ENCODE measurements at regions of chr1 and their contacts with region 1.

Region 1: DNA sequence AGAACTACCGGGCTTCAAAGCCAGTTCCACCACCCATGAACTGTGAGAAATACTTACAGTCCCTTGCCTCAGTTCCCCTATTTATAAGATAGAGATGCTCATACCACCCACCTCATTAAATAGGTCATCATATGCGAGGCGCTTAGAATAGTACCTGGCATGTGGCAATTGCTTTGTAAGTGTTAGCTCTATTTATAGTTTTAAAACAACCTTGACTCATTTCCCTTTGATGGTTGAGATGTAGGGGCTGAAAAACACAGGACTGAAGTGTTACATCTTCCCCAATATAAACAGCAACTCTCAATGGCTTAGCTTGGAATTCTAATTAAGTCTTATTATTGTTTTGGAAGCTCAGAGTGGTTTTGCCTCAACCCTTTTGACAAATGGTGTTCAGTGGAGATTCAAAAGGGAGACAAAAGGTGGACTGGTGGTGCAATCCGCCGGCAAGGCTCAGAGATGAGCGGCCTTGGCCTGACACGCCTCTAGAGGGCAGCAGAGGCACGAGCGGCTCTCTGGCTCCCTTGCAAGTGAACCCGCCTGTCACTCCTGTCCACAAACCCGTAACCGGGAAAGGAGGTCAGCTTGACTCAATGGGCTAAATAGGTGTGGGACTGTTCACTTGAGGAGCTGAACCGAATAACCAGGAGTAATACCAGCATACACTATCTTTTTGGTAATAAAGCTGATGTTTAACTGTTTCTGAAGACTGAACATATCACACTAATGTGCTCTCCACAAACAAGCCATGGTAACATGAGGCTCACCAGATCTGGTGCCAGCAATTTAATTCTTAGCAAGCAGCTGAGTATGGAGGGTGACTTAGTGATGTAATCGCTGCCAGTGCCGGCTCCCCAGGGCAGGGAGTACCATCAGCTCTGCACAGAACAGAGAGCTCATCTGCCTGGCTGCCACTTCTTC is 19.5 kb upstream of the SMYD2 start:
- H3K4me3 ChIP-seq: no peak overlapping the region
- H3K27ac ChIP-seq: no peak overlapping the region
- H3K4me1 ChIP-seq: no peaks in the 10 kb centered on the region
- CTCF ChIP-seq: peak; percentile 88

Region 2: DNA sequence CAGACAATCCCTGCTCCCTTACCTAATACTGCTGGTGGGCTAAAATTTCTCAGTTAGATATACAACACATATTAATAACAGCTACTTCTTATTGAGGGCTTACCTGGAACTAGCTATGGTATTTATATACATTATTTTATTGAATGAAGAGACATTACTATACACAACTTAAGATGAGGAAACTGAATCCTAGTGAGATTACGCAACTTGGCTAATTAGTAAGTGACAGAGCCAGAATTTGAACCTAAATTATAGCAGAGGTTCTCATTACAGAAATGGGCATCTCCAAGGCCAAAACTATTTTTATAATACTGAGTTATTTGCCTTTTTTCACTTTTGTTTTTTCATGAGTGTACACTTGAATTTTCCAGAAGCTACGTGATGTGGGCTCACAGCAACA is 25.0 kb before region 1 on chr1:
- CTCF ChIA-PET with region 1: interaction called, 17 read pairs
- POLR2A ChIA-PET with region 1: no interaction called
- H3K4me3 ChIP-seq: no peak overlapping the region
- H3K27ac ChIP-seq: no peak overlapping the region
- H3K4me1 ChIP-seq: no peaks in the 10 kb centered on the region
- CTCF ChIP-seq: no peak

Region 3: GRCh38 chr1:214303141-214303930 is 41.9 kb after region 1 on chr1:
- CTCF ChIA-PET with region 1: interaction called, 19 read pairs
- POLR2A ChIA-PET with region 1: no interaction called
- H3K4me3 ChIP-seq: no peak overlapping the region
- H3K27ac ChIP-seq: no peak overlapping the region
- H3K4me1 ChIP-seq: no peaks in the 10 kb centered on the region
- CTCF ChIP-seq: no peak

Region 4: DNA sequence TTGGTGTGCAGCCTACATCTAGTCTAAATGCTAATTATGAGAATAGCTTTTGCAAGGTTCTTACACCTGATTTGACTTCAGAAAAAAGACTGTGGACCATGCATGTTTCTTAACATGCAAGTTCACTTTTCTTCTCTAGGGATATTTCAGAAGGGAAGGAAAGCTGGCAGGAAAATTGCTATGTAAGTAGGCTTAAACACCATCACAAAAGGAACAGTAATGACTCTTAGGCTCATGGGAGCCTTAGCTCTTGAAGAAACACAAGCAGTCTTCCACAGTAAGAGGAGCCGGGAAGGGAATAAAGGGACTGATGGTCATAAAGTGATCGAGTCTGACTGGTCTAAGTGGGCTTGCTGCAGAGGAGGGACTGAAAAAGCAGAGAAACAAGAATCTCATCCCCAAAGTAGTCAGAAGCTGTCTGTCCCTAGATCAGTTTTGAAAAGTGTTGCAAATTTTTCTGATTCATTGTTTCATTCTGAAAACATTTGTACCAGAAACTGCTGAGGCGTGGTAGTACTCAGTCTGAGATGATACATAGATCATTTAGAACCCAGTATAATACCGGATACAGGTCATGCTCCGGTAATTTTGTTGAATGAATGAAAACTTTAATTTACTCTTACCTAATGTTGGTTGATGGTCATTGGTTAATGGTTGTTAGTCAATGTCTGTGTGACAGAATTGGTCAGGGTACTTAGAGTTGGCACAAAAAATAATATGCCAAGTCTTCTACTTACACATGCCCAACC is 60.4 kb after region 1 on chr1:
- CTCF ChIA-PET with region 1: interaction called, 428 read pairs
- POLR2A ChIA-PET with region 1: interaction called, 3 read pairs
- H3K4me3 ChIP-seq: no peak overlapping the region
- H3K27ac ChIP-seq: no peak overlapping the region
- H3K4me1 ChIP-seq: no peaks in the 10 kb centered on the region
- CTCF ChIP-seq: no peak

Region 5: DNA sequence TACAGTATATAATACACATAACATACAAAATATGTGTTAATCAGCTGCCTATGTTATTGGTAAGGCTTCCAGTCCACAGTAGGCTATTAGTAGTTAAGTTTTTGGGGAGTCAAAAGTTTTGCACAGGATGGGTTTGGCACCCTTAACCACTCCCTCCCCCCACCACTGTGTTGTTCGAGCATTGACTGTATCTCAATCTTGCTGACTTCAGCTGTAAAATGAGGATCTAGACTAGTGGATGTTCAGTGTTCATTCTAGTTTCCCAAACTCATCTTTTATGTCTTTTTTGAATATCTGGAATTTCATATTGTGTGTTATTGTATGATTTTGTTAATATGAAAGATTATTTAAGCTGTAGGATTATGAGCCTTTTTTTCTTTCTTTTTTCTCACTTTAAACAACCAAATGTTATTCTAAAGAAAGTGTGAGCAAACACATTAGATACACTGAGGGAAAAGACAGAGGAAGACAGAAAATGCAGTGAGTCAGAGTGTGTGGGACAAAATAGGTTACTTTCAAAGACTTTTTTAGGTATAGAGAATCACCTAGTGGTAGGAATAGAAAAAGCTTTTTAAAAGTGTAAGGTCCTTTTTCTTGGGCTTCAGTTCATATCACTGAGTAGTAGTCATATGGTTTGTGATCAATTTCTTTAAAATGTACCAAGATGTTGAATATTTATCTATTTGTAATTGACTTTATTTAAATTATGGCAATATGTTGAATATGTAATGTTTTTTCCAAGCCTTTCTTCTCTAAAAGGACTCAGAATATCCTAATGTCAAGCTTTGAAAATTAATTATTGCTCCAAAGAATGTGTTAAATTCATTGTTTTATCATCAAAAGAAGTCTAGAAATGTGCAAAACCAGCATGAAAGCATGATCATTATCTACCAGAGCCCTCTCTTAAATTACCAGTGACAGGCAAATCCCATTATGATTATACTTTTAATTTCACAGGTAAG is 323.6 kb after region 1 on chr1:
- CTCF ChIA-PET with region 1: interaction called, 21 read pairs
- POLR2A ChIA-PET with region 1: no interaction called
- H3K4me3 ChIP-seq: no peak overlapping the region
- H3K27ac ChIP-seq: no peak overlapping the region
- H3K4me1 ChIP-seq: no peaks in the 10 kb centered on the region
- CTCF ChIP-seq: peak; percentile 56; the same call in 1 of the 2 replicates